Heart right ventricle (tissue), 16 donors: ENCODE measurements at regions of chr1 and their contacts with region 1.

Region 1: DNA sequence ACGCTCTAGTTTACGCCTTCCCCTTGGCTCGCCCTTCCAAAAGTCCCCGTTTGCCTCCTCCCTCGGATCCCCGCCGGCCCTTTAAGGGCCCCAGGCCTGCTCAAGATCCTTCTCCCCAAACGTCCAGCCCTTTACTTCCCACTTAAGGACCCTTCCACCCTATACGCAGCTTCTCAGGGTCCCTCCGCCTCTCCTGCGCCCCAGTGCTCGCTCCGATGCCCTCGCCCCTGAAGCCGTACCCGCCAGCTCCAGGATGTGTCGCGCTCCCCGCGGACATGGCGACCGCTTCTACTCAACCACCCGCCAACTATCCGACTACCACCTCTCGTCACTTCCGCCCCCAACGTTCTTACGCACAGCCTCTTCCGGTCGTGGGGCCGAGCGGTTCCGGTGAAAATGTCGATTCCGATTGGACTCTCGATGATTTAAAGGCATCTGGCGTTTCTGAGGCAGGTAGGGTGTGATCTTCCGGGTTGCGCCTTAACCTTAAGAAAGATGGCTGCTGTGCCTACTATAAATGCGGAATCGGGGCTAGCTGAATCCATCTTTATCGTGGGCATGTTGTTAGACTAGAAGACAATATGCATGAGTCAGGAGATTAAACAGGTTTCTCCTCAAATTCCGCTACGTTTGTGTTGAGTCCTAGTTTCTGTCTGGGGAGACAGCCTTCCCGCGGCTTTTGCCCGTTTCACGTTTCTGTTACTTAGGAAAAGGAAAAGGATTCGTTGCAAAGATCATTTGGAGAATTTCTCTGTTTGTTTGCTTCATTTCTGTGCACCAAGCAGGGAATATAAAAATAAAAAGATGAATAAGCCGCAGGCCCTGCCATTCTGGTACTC is at the start of gene KHDC4:
- DNase-seq: peak; percentile 92 to 97
- ATAC-seq: peak; percentile 96 to 99 (median 98)
- H3K4me3 ChIP-seq: peak within 1 kb of the TSS; percentile 53 to 98 (median 78)
- H3K27ac ChIP-seq: peak within 1 kb of the TSS; percentile 81 to 97 (median 92)
- H3K4me1 ChIP-seq: peaks cover 29 to 66% (median 57%) of the 10 kb centered on the region in 9 donors
- H3K27me3 ChIP-seq: no peaks in the 10 kb centered on the region
- CTCF ChIP-seq: peak in 4 of 9 donors; percentile 26 to 45 (median 36)
- total RNA-seq, gene KHDC4: 17.6 to 30.3 (median 22.0) TPM

Region 2: DNA sequence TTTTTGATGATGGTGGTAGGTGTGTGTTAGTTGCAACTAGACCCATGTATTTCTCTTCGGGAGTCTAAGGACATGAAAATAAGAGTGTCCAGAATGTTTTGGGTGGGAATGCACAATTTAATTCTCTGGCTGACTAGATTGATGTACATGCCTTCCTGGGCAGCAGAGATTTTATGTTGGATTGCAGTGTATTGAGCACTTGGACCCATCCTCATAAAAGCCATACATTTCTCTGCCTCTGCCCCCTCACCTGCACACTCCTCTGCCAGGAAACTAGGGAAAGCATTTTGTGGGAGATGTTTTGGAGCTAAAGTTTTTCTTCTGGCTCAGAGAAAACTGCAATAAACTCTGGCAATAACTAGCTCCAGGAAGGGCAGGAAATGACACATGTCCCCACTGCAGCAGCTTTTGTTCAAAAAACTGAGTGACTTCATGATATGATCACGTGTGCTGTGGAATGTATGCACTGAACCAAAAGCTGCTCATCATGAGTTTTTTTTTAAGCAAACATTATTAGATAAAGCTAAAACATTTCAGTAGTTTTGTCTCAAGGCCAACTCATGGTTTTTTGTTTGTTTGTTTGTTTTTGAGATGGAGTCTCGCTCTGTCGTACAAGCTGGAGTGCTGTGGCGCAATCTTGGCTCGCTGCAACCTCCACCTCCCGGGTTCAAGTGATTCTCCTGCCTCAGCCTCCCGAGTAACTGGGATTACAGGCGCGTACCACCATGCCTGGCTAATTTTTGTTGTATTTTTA is 40.8 kb before region 1 on chr1:
- intact Hi-C with region 1: no loop called
- DNase-seq: peak in 1 of 2 donors; percentile 52
- ATAC-seq: peak; percentile 55 to 93 (median 91)
- H3K4me3 ChIP-seq: peak overlapping the region in 2 of 10 donors; percentile 9 to 10
- H3K27ac ChIP-seq: peak overlapping the region; percentile 44 to 85 (median 79)
- H3K4me1 ChIP-seq: peaks cover 0 to 34% (median 19%) of the 10 kb centered on the region in 9 donors
- H3K27me3 ChIP-seq: no peaks in the 10 kb centered on the region
- CTCF ChIP-seq: no peak

Region 3: GRCh38 chr1:155989242-155990004 is 55.1 kb after region 1 on chr1:
- intact Hi-C with region 1: loop called in 8 of 10 experiments (anchors 1 to 2 kb)
- DNase-seq: peak; percentile 66 to 73
- ATAC-seq: peak; percentile 86 to 94 (median 92)
- H3K4me3 ChIP-seq: peak overlapping the region in 9 of 10 donors; percentile 20 to 56 (median 47)
- H3K27ac ChIP-seq: peak overlapping the region in 9 of 10 donors; percentile 3 to 90 (median 50)
- H3K4me1 ChIP-seq: peaks cover 6 to 37% (median 14%) of the 10 kb centered on the region in 9 donors
- H3K27me3 ChIP-seq: no peaks in the 10 kb centered on the region
- CTCF ChIP-seq: peak; percentile 93 to 100 (median 98)

Region 4: GRCh38 chr1:156054500-156055280 is 120.4 kb after region 1 on chr1 and contains the start of gene LAMTOR2:
- intact Hi-C with region 1: loop called in 2 of 10 experiments (anchors 5 to 10 kb)
- DNase-seq: peak; percentile 96 to 98
- ATAC-seq: peak; percentile 89 to 96 (median 93)
- H3K4me3 ChIP-seq: peak within 1 kb of the TSS; percentile 66 to 86 (median 79)
- H3K27ac ChIP-seq: peak within 1 kb of the TSS; percentile 89 to 99 (median 96)
- H3K4me1 ChIP-seq: peaks cover 5 to 49% (median 31%) of the 10 kb centered on the region in 9 donors
- H3K27me3 ChIP-seq: no peaks in the 10 kb centered on the region
- CTCF ChIP-seq: peak in 2 of 9 donors; percentile 9 to 17
- total RNA-seq, gene LAMTOR2: 49.4 to 64.9 (median 59.6) TPM